HEK293 (cell line): ENCODE measurements at regions of chr12 and their contacts with region 1.

Region 1: GRCh38 chr12:9039397-9039977 is 50.1 kb downstream of the KLRG1 start:
- H3K4me3 ChIP-seq: no peak overlapping the region
- H3K27ac ChIP-seq: no peak overlapping the region
- H3K4me1 ChIP-seq: no peaks in the 10 kb centered on the region
- CTCF ChIP-seq: peak; percentile 45

Region 2: GRCh38 chr12:8662593-8662992 is 376.9 kb before region 1 on chr12 and contains the start of gene MFAP5:
- CTCF ChIA-PET with region 1: interaction called, 13 read pairs
- POLR2A ChIA-PET with region 1: no interaction called
- H3K4me3 ChIP-seq: no peak within 1 kb of the TSS
- H3K27ac ChIP-seq: no peak within 1 kb of the TSS
- H3K4me1 ChIP-seq: no peaks in the 10 kb centered on the region
- CTCF ChIP-seq: no peak

Region 3: DNA sequence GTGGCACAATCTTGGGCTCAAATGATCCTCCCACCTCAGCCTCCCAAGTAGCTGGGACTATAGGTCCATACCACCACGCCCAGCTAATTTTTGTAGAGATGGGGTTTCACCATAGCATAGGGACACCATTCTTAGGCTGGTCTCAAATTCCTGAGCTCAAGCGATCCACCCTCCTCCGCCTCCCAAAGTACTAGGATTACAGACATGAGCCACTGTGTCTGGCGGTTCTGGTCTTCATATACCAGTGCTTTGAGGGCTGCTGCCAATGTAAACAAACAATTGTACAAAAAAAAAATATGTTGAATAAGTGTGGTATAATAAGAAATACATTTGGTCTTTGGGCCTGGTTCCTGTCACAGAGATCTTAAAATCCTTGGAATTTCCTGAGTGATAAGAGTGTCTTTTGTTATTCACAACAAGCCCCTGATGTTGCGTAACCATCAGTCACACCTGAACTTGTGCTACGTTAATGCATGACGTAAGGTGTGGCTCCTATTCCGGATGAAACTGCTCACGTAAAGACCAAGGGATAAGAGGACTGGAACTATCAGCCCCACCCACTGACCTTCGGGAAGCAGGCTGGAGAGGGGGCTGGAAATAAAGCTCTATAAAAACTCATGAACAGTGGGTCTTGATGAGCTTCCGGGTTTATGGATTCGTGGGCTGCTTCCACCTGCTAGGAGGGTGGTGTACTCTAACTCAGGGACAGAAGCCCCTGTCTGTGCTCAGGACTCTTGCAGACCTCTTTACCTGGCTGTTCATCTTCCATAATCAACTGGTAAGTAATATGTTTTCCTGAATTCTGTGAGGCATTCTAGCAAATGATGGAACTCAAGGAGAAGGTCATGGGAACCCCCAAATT is 358.2 kb before region 1 on chr12:
- CTCF ChIA-PET with region 1: interaction called, 10 read pairs
- POLR2A ChIA-PET with region 1: interaction called, 6 read pairs
- H3K4me3 ChIP-seq: peak overlapping the region; percentile 20
- H3K27ac ChIP-seq: no peak overlapping the region
- H3K4me1 ChIP-seq: no peaks in the 10 kb centered on the region
- CTCF ChIP-seq: no peak

Region 4: GRCh38 chr12:8949342-8950220 is 89.9 kb before region 1 on chr12 and contains the start of gene M6PR:
- CTCF ChIA-PET with region 1: interaction called, 20 read pairs
- POLR2A ChIA-PET with region 1: no interaction called
- H3K4me3 ChIP-seq: peak within 1 kb of the TSS; percentile 94
- H3K27ac ChIP-seq: peak within 1 kb of the TSS; percentile 82
- H3K4me1 ChIP-seq: peaks cover 9% of the 10 kb centered on the region
- CTCF ChIP-seq: peak; percentile 96

Region 5: DNA sequence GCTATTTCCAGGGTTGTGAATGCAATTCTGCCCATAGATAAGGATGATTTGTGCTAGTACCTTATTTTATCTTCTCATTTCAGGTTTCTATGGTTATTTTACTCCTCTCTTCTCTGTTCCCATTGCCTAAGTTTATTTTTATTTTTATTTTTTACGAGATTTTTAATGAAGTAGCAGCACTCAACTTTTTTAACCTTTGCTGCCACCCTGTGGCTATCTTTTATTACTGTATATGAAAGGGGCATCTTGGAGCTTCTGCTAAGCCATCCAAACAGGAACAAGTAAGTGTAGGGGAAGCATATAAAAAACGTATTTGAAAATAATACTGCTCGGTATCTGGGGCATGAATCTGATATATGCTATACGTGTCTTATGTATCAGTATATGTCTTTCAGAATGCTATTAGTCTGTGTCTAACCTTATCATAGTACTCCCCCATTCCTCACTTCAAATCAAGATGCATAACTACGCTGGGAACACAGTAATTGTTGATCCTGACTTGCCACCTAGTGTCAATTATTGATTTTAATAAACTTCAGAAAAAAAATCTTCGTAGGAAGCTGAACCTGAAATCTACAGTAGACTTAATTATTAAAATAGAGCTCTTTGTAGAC is 10.1 kb after region 1 on chr12:
- CTCF ChIA-PET with region 1: interaction called, 45 read pairs
- POLR2A ChIA-PET with region 1: no interaction called
- H3K4me3 ChIP-seq: no peak overlapping the region
- H3K27ac ChIP-seq: no peak overlapping the region
- H3K4me1 ChIP-seq: no peaks in the 10 kb centered on the region
- CTCF ChIP-seq: no peak

Region 6: GRCh38 chr12:9079883-9080675 is 40.6 kb after region 1 on chr12:
- CTCF ChIA-PET with region 1: no interaction called
- POLR2A ChIA-PET with region 1: no interaction called
- H3K4me3 ChIP-seq: no peak overlapping the region
- H3K27ac ChIP-seq: no peak overlapping the region
- H3K4me1 ChIP-seq: no peaks in the 10 kb centered on the region
- CTCF ChIP-seq: no peak

Region 7: GRCh38 chr12:9169979-9170634 is 130.6 kb after region 1 on chr12:
- CTCF ChIA-PET with region 1: no interaction called
- POLR2A ChIA-PET with region 1: no interaction called
- H3K4me3 ChIP-seq: no peak overlapping the region
- H3K27ac ChIP-seq: no peak overlapping the region
- H3K4me1 ChIP-seq: no peaks in the 10 kb centered on the region
- CTCF ChIP-seq: no peak